HEK293T (cell line): ENCODE measurements at regions of chr14 and their contacts with region 1.

Region 1: GRCh38 chr14:91323671-91324605 is 79.4 kb upstream of the GPR68 start:
- DNase-seq: peak; percentile 65

Region 2: DNA sequence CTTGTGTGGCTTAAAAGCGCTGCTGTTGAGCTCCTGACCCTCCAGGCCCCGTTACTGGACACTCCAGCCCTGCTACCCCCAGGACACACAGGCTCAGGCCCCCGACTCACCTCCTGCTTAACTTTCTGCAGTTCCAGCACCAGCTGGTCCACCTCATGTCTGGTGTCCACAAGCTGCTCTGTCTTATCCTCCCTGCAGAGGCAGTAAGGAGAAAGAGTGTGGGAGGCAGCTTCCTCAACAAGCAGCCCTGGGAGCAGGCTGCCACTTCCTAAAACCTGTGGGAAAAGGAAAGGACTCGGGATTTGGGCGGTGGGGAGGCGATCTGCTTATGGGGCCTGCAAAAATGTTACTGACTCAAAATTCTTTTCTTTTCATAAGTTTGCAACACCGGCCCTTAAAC is 14.4 kb after region 1 on chr14:
- CTCF ChIA-PET with region 1: interaction called, 20 read pairs
- POLR2A ChIA-PET with region 1: no interaction called
- DNase-seq: no peak

Region 3: DNA sequence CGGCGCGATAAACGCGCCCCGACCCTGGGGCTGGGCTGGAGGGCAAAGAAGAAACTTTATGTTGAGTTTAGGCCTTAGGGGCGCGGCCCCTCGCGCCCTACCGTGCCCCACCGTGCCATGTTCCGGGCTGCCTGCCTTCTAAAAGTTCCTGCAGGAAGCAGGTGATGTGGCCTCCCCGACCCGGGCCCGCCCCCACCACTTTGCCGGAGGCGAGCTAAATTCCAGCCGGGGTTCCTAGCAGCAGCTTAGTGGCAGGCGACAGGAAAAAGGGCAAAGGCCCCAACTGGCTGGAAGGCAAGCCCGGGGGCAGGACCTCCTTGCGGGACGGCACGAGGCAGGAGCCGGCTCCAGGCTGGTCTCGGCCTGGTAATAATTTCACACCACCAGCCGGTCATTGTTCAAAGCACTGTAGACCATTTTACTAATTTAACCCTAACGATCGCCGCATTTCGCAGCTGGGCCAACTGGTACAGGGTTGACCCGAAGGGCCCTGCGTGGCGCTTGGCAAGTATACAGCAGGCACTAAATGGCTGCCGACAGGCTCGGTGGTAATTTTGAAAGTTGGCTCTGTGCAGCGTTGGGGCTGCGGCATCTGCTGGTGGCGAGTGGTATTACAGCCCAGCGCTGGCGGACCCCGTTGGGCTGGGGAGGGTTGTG is 94.6 kb after region 1 on chr14:
- CTCF ChIA-PET with region 1: interaction called, 18 read pairs
- POLR2A ChIA-PET with region 1: interaction called, 6 read pairs
- DNase-seq: peak; percentile 66